ENCODE measurements at regions of chr17 and their contacts with region 1.

Region 1: DNA sequence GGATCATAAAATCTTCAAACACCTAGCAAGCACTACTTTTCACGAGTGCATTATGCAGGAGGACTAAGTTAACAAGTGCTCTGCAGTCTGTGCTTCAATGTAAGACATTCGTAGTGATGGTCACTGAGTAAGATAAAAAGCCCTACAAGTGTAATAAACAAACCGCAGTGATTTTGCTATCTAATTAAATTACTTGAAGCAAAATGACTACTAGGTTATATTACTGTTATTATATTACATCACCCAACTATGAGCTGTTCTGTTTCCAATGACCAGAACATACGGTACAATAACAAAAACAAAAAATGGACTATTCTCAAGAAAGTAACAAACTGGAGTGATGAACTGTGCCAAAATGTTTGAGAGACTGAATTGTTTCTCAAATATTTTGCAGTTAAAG is 11.2 kb downstream of the KLHL10 start:
- DNase-seq: no peak
- ATAC-seq: no peak
- H3K4me3 ChIP-seq: no peak overlapping the region
- H3K27ac ChIP-seq: no peak overlapping the region
- H3K4me1 ChIP-seq: peaks cover 12% of the 10 kb centered on the region; the same call in 2 of the 3 replicates
- CTCF ChIP-seq: no peak
- EP300 ChIP-seq: no peak
- POLR2A ChIP-seq: no peak
- RAD21 ChIP-seq: no peak

Region 2: DNA sequence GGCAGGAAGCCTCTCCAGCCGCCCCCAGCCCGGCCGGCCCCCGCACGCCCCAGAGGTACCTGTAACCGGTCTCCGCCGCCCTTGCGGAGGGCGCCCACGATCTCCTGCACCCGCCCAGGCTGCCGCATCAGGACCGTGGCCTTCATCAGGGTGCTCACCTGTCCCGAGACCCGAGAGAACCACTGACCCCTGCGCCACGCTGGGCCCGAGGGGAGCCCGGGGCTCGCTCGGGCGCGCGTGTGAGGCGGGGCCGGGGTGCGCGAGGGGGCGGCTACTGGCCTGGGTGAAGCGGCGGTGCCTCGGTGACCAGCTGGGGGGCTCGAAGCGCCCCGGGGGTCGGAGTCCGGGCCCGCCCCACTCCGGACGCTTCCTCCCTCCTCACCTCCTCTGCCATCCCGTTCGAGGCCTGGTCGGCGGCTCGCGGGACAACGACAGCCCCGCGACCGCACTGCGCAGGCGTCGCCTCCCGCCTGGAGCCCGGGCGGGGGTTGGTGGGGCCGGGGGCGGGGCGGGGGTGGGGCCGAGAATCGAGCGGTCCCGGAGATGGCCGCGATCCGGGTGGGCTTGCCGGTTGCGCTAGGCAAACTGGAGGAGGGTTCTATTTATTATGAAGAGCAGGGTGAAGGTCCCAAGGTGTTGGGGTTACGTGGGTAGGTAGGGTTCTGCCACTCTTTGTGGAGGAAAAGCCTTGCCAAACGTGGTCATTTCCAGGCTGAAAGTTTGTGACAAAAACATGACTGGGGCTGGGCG is 12.8 kb before region 1 on chr17 and contains the start of gene NT5C3B:
- CTCF ChIA-PET with region 1: interaction called, 11 read pairs
- POLR2A ChIA-PET with region 1: interaction called, 3 read pairs
- DNase-seq: peak; percentile 60 to 93
- ATAC-seq: peak; percentile 94
- H3K4me3 ChIP-seq: peak within 1 kb of the TSS; percentile 74
- H3K27ac ChIP-seq: peak within 1 kb of the TSS; percentile 87 to 97
- H3K4me1 ChIP-seq: peaks cover 13% of the 10 kb centered on the region
- CTCF ChIP-seq: no peak
- EP300 ChIP-seq: no peak
- POLR2A ChIP-seq: peak; percentile 85
- RAD21 ChIP-seq: no peak
- polyA plus RNA-seq, gene NT5C3B: 167 and 171 TPM in 2 replicates

Region 3: GRCh38 chr17:41864836-41865595 is 16.2 kb after region 1 on chr17 and contains the start of gene KLHL11:
- CTCF ChIA-PET with region 1: interaction called, 11 read pairs
- POLR2A ChIA-PET with region 1: interaction called, 5 read pairs
- DNase-seq: peak; percentile 93 to 96
- ATAC-seq: peak; percentile 89 to 96
- H3K4me3 ChIP-seq: peak within 1 kb of the TSS; percentile 89
- H3K27ac ChIP-seq: peak within 1 kb of the TSS; percentile 92 to 94
- H3K4me1 ChIP-seq: peaks cover 34% of the 10 kb centered on the region
- CTCF ChIP-seq: no peak
- EP300 ChIP-seq: no peak
- POLR2A ChIP-seq: peak; percentile 96
- RAD21 ChIP-seq: peak in 1 of 2 experiments; percentile 24; a peak in 2 of 5 replicates
- polyA plus RNA-seq, gene KLHL11: 12.7 and 13.7 TPM in 2 replicates

Region 4: DNA sequence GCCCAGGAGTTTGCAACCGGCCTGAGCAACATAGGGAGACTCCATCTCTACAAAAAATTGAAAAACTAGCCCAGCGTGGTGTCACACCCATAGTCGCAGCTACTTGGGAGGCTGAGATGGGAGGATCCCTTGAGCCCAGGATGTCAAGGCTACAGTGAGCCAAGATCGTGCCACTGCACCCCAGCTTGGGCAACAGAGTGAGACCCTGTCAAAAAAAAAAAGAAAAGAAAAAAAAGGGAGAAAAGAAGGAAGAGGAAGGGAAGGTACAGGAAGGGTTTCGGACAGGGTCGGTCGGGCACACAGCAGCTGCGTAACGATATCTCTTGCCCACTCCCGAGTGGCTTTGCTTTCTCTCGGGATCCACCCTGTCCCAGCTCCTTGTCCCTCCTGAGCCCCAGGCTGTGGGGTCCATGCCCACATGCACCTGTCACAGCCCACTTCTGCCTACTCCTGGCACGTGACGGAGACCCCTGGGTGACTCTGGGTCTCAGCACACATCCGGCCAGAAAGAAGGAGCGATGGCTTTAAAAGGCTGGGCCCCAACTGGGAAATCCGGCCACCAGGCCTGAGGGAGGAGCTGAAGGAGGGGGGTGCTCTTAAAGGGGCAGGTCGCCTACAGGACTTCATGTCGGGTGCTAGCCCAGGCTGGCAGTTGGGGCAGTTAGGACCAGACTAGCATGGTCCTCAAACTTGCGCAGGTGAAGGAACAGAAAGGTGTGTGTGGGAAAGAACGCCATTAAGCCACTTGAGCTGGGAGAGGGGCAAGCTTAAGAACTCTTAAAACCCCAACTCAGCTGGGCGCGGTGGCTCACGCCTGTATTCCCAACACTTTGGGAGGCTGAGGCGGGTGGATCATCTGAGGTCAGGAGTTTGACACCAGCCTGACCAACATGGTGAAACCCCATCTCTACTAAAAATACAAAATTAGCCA is 345.4 kb after region 1 on chr17 and contains the start of gene GHDC:
- CTCF ChIA-PET with region 1: no interaction called
- POLR2A ChIA-PET with region 1: no interaction called
- DNase-seq: peak; percentile 83 to 92
- ATAC-seq: peak; percentile 97
- H3K4me3 ChIP-seq: peak within 1 kb of the TSS; percentile 79
- H3K27ac ChIP-seq: peak within 1 kb of the TSS; percentile 91 to 94
- H3K4me1 ChIP-seq: peaks cover 8% of the 10 kb centered on the region; the same call in 2 of the 3 replicates
- CTCF ChIP-seq: no peak
- EP300 ChIP-seq: no peak
- POLR2A ChIP-seq: peak; percentile 56
- RAD21 ChIP-seq: no peak
- polyA plus RNA-seq, gene GHDC: 12.3 and 14.2 TPM in 2 replicates